IMR-90 (cell line): ENCODE measurements at regions of chr9 and their contacts with region 1.

Region 1: GRCh38 chr9:108565651-108566378 is 290.0 kb downstream of the ACTL7B start:
- DNase-seq: peak; percentile 88
- ATAC-seq: peak; percentile 94
- H3K4me3 ChIP-seq: no peak overlapping the region
- H3K27ac ChIP-seq: no peak overlapping the region
- H3K4me1 ChIP-seq: no peaks in the 10 kb centered on the region; the same call in 1 of the 2 replicates
- H3K27me3 ChIP-seq: no peaks in the 10 kb centered on the region
- CTCF ChIP-seq: peak; percentile 96
- POLR2A ChIP-seq: peak; percentile 69
- RAD21 ChIP-seq: peak; percentile 99

Region 2: DNA sequence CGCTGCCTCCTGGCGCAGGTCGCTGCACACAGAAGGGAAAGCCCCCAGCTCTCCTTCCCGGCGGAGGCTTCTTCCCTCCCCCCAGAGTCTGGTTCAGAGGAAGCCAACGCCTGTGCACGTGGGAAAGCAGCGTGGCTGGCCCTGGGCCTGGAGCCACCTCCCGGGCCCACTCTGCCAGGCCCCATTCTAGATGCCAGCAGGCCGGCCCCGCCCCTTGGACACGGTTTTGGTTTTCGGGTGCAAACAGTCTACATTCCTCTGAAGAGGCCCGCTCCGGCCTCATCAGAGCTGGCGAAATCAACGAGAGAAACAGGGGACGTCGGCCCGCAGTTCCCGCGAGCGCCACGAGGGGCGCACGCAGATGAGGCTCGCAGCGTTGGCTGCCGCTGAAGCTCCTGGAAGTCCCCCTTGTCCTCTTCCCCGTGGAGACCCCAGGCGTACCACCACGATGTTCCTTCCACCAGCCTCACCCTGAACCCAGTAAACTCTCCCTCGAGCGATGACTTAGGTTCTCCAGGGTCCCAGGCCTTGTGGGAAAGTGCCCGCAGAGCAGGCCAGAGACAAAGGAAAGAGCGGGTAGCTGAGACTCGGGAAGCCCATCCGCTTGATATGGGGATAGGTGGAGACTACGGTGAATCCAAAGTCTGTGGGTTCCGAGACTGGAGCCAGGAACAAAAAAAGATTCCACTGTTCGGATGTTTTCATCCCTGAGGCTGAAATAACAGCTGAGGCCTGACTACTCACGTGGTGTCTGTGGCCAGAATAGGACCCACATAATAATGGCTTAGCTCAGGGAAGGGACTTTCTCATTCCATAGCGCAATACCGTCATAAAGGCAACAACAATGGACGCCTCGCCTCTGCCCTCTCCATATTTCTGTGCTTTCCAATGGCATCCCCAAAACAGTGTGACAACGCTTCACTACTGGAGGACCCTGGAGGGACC is 1140.4 kb before region 1 on chr9:
- CTCF ChIA-PET with region 1: no interaction called
- POLR2A ChIA-PET with region 1: no interaction called
- dilution Hi-C with region 1: no loop called
- in situ Hi-C with region 1: no loop called
- intact Hi-C with region 1: loop called (anchors 5 kb)
- DNase-seq: peak; percentile 19
- ATAC-seq: peak; percentile 87
- H3K4me3 ChIP-seq: no peak overlapping the region
- H3K27ac ChIP-seq: no peak overlapping the region
- H3K4me1 ChIP-seq: no peaks in the 10 kb centered on the region
- H3K27me3 ChIP-seq: peaks cover 1% of the 10 kb centered on the region; the same call in 1 of the 2 replicates
- CTCF ChIP-seq: peak; percentile 60
- POLR2A ChIP-seq: no peak
- RAD21 ChIP-seq: peak; percentile 40

Region 3: GRCh38 chr9:107484117-107484723 is 1081.6 kb before region 1 on chr9:
- CTCF ChIA-PET with region 1: interaction called, 3 read pairs
- POLR2A ChIA-PET with region 1: no interaction called
- dilution Hi-C with region 1: no loop called
- in situ Hi-C with region 1: loop called (anchors 5 kb)
- intact Hi-C with region 1: loop called (anchors 1 kb)
- DNase-seq: peak; percentile 81
- ATAC-seq: peak; percentile 74
- H3K4me3 ChIP-seq: no peak overlapping the region
- H3K27ac ChIP-seq: no peak overlapping the region
- H3K4me1 ChIP-seq: peaks cover 2% of the 10 kb centered on the region
- H3K27me3 ChIP-seq: no peaks in the 10 kb centered on the region
- CTCF ChIP-seq: peak; percentile 66
- POLR2A ChIP-seq: peak; percentile 82
- RAD21 ChIP-seq: peak; percentile 78

Region 4: GRCh38 chr9:107749787-107750444 is 815.9 kb before region 1 on chr9:
- CTCF ChIA-PET with region 1: no interaction called
- POLR2A ChIA-PET with region 1: no interaction called
- dilution Hi-C with region 1: no loop called
- in situ Hi-C with region 1: loop called (anchors 25 kb)
- intact Hi-C with region 1: no loop called
- DNase-seq: peak; percentile 96
- ATAC-seq: peak; percentile 78
- H3K4me3 ChIP-seq: no peak overlapping the region
- H3K27ac ChIP-seq: peak overlapping the region; percentile 81
- H3K4me1 ChIP-seq: peaks cover 19% of the 10 kb centered on the region
- H3K27me3 ChIP-seq: no peaks in the 10 kb centered on the region
- CTCF ChIP-seq: no peak
- POLR2A ChIP-seq: no peak
- RAD21 ChIP-seq: no peak

Region 5: DNA sequence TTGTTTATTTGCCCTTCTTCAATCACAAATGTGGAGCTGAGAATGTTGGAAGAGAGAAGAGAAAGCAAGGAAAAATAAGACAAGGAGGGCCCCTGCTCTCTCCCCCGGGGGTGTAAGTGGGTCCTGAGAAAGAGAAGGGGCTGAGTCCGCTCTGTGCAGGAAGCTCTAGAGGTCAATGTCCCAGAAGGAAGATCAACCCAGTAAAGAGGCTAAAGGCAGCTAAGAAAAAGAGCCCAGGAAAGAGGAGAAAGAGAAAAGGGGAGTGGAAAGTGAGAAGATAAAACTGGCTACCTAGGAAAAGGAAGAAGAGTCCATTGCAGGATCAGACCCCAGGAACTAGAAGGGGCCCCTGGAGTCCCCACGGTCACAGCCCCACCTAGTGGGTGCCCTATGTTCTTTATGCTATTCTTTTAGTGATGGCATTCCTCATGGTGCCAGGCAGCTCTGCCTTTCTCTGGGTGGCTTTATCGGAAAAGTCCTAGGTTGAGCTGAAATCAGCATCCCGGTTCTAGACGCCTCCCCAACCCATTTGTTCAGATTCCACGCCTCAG is 293.4 kb before region 1 on chr9:
- CTCF ChIA-PET with region 1: no interaction called
- POLR2A ChIA-PET with region 1: no interaction called
- dilution Hi-C with region 1: no loop called
- in situ Hi-C with region 1: no loop called
- intact Hi-C with region 1: loop called (anchors 1 kb)
- DNase-seq: peak; percentile 39
- ATAC-seq: peak; percentile 82
- H3K4me3 ChIP-seq: peak overlapping the region; percentile 24; the same call in 1 of the 2 replicates
- H3K27ac ChIP-seq: peak overlapping the region; percentile 88; the same call in 1 of the 2 replicates
- H3K4me1 ChIP-seq: peaks cover 7% of the 10 kb centered on the region; the same call in 1 of the 2 replicates
- H3K27me3 ChIP-seq: no peaks in the 10 kb centered on the region
- CTCF ChIP-seq: peak; percentile 58
- POLR2A ChIP-seq: no peak
- RAD21 ChIP-seq: peak; percentile 70

Region 6: DNA sequence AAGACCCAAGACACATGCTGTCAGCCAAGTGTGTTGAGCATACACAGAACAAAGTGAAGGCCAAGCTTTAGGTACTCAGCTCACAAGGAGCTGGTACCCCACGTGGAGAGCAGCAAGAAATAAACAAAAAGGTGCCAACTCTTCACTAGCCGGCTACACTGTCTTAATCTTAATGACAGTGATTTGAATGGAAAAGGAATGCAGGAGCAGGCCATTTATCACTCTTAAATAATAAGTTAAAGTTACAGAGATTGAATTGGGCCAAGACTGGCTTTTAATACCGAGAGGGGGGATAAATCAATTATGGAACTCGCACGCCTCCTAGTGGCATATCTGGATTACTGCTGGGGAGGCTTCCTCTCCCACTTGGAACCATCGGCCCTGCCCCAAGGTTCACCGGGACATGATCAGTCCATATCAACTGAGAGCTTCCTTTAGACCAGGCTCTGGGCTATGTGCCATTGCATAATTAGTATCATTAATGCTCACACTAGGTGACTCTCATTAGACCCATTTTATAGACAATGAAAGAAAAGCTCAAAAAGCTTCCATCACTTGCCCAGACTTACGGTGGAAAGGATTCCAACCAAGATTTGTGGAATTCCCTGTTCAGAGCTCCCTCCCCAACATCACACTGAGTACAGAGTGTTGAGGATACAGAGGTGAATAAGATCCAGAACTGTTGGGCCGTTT is 196.0 kb after region 1 on chr9:
- CTCF ChIA-PET with region 1: no interaction called
- POLR2A ChIA-PET with region 1: no interaction called
- dilution Hi-C with region 1: no loop called
- in situ Hi-C with region 1: no loop called
- intact Hi-C with region 1: loop called (anchors 2 kb)
- DNase-seq: peak; percentile 51
- ATAC-seq: peak; percentile 98
- H3K4me3 ChIP-seq: no peak overlapping the region
- H3K27ac ChIP-seq: no peak overlapping the region
- H3K4me1 ChIP-seq: no peaks in the 10 kb centered on the region
- H3K27me3 ChIP-seq: peaks cover 11% of the 10 kb centered on the region; the same call in 1 of the 2 replicates
- CTCF ChIP-seq: peak; percentile 89
- POLR2A ChIP-seq: no peak
- RAD21 ChIP-seq: peak; percentile 86